ENCODE measurements at regions of chr4 and their contacts with region 1.

Region 1: GRCh38 chr4:94370533-94371254 is 28.1 kb upstream of the HPGDS start:
- DNase-seq: no peak
- H3K4me3 ChIP-seq: no peak overlapping the region
- H3K4me3 Mint-ChIP-seq: no peak overlapping the region
- H3K27ac ChIP-seq: no peak overlapping the region
- H3K27ac Mint-ChIP-seq: no peak overlapping the region
- H3K4me1 ChIP-seq: no peaks in the 10 kb centered on the region
- H3K4me1 Mint-ChIP-seq: no peaks in the 10 kb centered on the region
- H3K27me3 ChIP-seq: no peaks in the 10 kb centered on the region
- H3K27me3 Mint-ChIP-seq: peaks cover 4 to 29% of the 10 kb centered on the region in 2 donors

Region 2: DNA sequence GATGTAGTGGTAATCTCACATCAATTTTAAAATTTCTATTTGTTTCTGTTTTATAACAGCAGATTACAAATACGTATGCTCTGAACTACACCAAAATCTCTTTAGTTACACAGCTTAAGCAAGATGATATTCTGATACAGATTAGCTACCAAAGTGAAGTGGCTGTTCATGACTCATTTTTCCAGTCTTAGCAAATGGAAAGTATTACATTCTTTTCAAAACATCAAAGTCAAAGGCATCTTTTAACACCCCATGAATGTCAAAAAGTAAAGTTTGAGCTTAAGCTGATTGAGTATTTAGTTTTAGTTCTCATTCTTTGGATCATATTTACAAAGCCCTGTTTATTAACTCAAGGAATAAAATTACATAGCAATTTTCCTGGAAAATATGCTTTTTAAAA is 21.5 kb before region 1 on chr4:
- CTCF ChIA-PET with region 1: no interaction called
- POLR2A ChIA-PET with region 1: no interaction called
- DNase-seq: no peak
- H3K4me3 ChIP-seq: no peak overlapping the region
- H3K4me3 Mint-ChIP-seq: no peak overlapping the region
- H3K27ac ChIP-seq: no peak overlapping the region
- H3K27ac Mint-ChIP-seq: no peak overlapping the region
- H3K4me1 ChIP-seq: no peaks in the 10 kb centered on the region
- H3K4me1 Mint-ChIP-seq: peaks cover 0 to 4% (median 3%) of the 10 kb centered on the region in 3 donors
- H3K27me3 ChIP-seq: no peaks in the 10 kb centered on the region
- H3K27me3 Mint-ChIP-seq: peaks cover 3 to 13% of the 10 kb centered on the region in 2 donors

Region 3: GRCh38 chr4:94732358-94732698 is 361.6 kb after region 1 on chr4:
- CTCF ChIA-PET with region 1: no interaction called
- POLR2A ChIA-PET with region 1: interaction called, 10 read pairs
- DNase-seq: no peak
- H3K4me3 ChIP-seq: no peak overlapping the region
- H3K4me3 Mint-ChIP-seq: no peak overlapping the region
- H3K27ac ChIP-seq: no peak overlapping the region
- H3K27ac Mint-ChIP-seq: no peak overlapping the region
- H3K4me1 ChIP-seq: no peaks in the 10 kb centered on the region
- H3K4me1 Mint-ChIP-seq: no peaks in the 10 kb centered on the region
- H3K27me3 ChIP-seq: no peaks in the 10 kb centered on the region
- H3K27me3 Mint-ChIP-seq: peaks cover 0 to 3% of the 10 kb centered on the region in 2 donors

Measured in CD8-positive, alpha-beta memory T cell (primary cell).